Activated CD4-positive, alpha-beta T cell treated with anti-CD3 and anti-CD28 coated beads for 36 hours (primary cell): ENCODE measurements at regions of chr10 and their contacts with region 1.

Region 1: GRCh38 chr10:100986952-100987750 is at the starts of genes MRPL43 and TWNK:
- DNase-seq: peak; percentile 93
- ATAC-seq: peak; percentile 98
- H3K4me3 Mint-ChIP-seq: peak within 1 kb of the TSS; percentile 100
- H3K27ac Mint-ChIP-seq: peak within 1 kb of the TSS; percentile 94
- H3K4me1 Mint-ChIP-seq: peaks cover 43% of the 10 kb centered on the region
- H3K27me3 Mint-ChIP-seq: no peaks in the 10 kb centered on the region
- total RNA-seq, gene MRPL43: 53.4 to 62.6 TPM
- total RNA-seq, gene TWNK: 13.8 to 17.9 TPM

Region 2: DNA sequence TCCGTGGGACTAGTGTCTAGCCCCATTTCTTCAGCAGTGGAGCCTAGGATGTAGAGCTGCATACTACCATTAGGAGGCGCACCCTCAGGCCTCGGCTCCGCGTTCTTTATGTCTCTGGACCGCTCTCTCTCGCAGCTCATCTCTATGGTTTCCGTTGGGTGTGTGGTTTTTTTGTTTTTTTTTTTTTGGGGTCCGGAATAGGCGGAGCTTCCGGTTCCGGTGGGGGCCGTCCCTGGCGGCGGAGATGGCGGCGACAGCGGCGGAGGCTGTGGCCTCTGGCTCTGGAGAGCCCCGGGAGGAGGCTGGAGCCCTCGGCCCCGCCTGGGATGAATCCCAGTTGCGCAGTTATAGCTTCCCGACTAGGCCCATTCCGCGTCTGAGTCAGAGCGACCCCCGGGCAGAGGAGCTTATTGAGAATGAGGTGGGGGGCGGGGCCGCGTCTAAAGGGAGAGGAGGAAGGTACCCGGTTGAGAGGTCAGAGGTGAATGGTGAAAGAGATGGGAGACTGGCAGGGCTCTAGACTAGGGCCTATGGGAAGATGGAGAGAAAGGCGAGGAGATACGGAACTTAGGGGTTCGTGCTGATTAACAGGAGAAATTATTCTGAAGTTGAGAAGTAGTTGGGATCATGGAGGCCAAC is 451.3 kb before region 1 on chr10 and contains the start of gene HIF1AN:
- CTCF ChIA-PET with region 1: no interaction called
- POLR2A ChIA-PET with region 1: no interaction called
- intact Hi-C with region 1: loop called in 1 of 2 experiments (anchors 1 kb)
- DNase-seq: peak; percentile 93
- ATAC-seq: peak; percentile 96
- H3K4me3 Mint-ChIP-seq: no peak within 1 kb of the TSS
- H3K27ac Mint-ChIP-seq: no peak within 1 kb of the TSS
- H3K4me1 Mint-ChIP-seq: peaks cover 27% of the 10 kb centered on the region
- H3K27me3 Mint-ChIP-seq: no peaks in the 10 kb centered on the region
- total RNA-seq, gene HIF1AN: 45.9 to 50.8 TPM

Region 3: DNA sequence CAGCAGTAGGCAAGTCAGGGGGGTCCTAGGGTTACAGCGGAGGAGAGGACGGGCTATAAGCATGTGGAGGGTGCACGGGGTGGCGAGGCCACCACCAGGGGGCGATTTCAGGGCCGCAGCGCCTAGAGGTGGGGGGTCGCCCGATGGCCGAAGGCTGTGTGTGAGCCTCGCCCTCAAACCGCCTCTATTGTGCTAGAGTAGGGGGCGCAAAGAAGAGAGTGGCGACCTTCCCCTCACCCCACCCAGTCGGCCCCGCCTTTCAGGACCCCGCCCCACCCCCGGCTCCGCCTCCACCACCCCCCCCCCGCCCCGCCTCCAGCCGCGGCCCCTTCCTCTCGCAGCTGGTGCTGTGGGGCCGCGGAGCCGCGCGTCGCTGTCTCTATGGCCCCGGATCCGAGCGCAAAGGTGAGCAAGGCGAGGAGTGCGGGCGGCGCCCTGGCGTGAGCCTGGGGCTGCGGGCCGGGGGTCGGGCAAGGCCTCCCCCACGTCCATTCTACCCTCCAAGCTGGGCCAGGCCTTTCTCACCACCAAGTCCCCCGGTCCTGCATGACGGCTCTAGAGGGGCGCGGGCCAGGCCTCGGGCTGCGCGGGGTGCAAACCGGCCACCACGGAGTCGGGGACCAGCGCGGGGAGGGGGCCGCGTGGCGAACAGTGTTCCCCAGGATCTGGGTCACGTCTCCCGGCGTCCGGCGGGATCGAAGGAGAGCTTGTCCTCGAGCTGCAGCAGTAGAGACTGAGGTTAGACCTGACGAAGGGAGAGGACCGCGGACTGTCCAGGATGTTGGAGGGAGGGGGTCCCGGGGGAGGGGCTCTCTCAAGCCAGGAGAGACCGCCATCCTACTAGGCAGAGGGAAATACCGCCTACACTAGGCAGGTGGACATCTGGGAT is 17.7 kb before region 1 on chr10 and contains the start of gene SEMA4G:
- CTCF ChIA-PET with region 1: interaction called, 5 read pairs
- POLR2A ChIA-PET with region 1: no interaction called
- intact Hi-C with region 1: loop called in 1 of 2 experiments (anchors 1 kb)
- DNase-seq: peak; percentile 62
- ATAC-seq: peak; percentile 81
- H3K4me3 Mint-ChIP-seq: peak within 1 kb of the TSS; percentile 41
- H3K27ac Mint-ChIP-seq: no peak within 1 kb of the TSS
- H3K4me1 Mint-ChIP-seq: peaks cover 13% of the 10 kb centered on the region
- H3K27me3 Mint-ChIP-seq: no peaks in the 10 kb centered on the region
- total RNA-seq, gene SEMA4G: 0.62 to 0.84 TPM

Region 4: DNA sequence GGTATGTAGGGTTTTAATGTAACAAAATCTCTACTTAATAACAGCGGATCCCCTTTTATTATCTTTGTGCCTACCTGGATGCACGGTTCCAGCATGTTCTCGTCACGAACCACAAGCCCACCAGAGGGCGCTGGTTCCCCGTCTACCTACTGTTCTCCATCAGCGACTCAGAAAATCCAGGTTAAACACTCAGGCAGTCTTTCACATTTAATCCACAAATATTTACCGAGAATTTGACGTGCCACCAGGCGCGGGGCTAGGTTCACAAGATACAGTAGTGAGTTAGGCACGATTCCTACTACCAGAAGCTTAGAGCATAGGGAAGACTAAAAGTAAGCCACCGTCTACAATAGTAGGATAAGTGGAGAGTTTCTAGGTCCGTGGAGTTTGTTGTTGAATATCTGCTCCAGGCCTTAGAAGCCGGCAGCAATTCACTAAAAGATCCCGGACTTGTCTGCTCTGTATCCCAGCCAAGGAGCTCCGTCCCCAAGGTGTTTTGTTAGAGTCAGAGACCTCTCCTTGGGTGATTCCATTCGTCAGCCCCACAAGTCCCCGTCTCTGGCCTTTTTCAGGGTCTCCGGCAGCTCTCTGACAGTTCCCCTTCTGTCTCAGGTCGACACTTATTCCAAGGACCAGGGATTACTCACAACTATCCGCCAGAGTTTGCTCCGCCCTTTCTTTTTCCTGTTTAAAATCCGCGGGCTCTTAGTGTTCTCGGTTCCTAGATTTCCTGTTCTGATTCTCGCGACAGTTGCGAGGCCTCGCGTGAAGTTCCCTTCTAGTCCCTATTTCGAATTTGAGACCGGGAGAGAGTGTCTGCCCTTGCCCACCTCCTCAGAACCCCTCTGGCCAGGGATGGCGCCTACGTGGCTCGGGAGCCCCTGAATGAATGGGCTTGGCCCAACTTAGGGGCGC is 73.1 kb after region 1 on chr10:
- CTCF ChIA-PET with region 1: interaction called, 3 read pairs
- POLR2A ChIA-PET with region 1: no interaction called
- intact Hi-C with region 1: loop called in 1 of 2 experiments (anchors 1 kb)
- DNase-seq: peak; percentile 95
- ATAC-seq: peak; percentile 75
- H3K4me3 Mint-ChIP-seq: peak overlapping the region; percentile 82
- H3K27ac Mint-ChIP-seq: peak overlapping the region; percentile 96
- H3K4me1 Mint-ChIP-seq: peaks cover 22% of the 10 kb centered on the region
- H3K27me3 Mint-ChIP-seq: peaks cover 22% of the 10 kb centered on the region